Vagina (tissue), 2 donors: ENCODE measurements at regions of chr9 and their contacts with region 1.

Region 1: DNA sequence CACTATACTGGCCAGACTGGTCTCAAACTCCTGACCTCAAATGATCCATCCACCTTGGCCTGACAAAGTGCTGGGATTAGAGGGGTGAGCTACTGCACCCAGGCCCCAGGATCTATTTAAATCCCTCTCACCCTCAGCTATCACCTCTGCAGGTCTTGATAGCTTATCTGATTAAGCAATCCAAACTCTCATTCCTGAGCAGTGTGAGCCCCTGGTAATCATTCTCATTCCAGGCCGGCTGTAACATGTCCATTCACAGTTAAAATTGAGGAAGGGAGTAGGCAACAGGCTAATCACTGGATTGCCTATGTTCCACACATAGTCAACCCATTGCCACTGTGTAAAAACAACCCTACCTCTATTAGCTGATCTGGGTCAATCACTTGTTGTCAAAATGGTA is 111.1 kb downstream of the AGTPBP1 start:
- DNase-seq: no peak
- H3K4me3 ChIP-seq: no peak overlapping the region
- H3K27ac ChIP-seq: no peak overlapping the region
- H3K4me1 ChIP-seq: no peaks in the 10 kb centered on the region
- H3K27me3 ChIP-seq: no peaks in the 10 kb centered on the region
- CTCF ChIP-seq: no peak
- POLR2A ChIP-seq: no peak

Region 2: DNA sequence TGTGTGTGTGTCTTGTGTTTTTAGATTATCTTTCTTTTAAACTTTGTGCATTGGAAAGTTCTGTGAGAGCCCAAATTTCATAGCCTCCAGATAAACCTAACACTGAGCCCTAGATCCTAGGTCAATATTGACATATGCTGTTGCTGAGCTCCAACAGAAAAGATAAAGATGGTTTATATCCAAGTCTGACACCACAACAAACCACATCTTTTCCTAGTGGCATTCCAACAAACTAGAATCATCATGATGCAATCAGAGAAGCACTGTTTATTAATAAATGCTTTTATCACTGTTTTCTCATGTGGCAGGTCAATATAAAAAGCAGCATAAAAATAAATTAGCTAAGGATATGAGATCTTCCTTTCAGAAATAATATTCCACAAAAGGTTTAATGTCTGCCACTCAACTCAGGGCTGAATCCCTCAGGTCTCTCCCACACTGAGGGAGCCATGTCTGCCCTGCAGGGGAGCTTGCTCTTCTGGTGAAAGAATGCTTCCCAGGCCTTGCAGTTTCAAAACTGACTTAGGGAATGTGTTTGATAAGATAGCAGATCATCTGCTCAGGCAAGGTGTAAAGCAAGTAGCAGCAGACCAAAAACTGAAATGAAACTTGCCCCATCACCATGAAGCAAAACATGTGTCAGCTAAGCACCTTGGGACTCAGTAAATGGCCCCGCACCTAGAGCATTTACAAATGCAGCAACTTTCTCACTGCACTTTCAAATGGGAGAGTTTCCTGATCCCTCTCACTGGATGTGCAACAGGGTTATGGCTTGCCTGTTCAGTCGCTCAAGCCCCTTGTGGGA is 382.0 kb before region 1 on chr9:
- intact Hi-C with region 1: no loop called
- DNase-seq: no peak
- H3K4me3 ChIP-seq: no peak overlapping the region
- H3K27ac ChIP-seq: no peak overlapping the region
- H3K4me1 ChIP-seq: peaks cover 10% of the 10 kb centered on the region
- H3K27me3 ChIP-seq: no peaks in the 10 kb centered on the region
- CTCF ChIP-seq: no peak
- POLR2A ChIP-seq: no peak

Region 3: DNA sequence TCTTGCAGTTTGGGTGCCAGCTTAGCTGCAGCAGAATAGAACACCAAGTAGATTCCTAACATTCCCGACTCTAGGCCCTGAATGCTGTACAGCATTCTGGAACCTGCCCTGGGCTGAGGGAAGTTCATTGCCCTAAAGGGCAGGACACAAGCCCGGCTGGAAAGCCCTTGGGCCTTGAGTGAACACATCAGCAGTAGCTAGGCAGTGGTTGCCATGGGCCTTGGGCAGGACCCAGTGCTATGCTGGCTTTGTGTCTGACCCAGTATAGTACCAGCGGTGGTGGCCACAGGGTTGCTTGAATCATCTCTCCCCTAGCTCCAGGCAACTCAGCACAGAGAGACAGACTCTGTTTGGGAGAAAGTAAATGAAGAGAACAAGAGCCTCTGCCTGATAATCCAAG is 26.7 kb before region 1 on chr9:
- intact Hi-C with region 1: loop called (anchors 1 kb)
- DNase-seq: no peak
- H3K4me3 ChIP-seq: no peak overlapping the region
- H3K27ac ChIP-seq: no peak overlapping the region
- H3K4me1 ChIP-seq: no peaks in the 10 kb centered on the region
- H3K27me3 ChIP-seq: no peaks in the 10 kb centered on the region
- CTCF ChIP-seq: no peak
- POLR2A ChIP-seq: no peak

Region 4: GRCh38 chr9:85647571-85647970 is 16.9 kb after region 1 on chr9:
- intact Hi-C with region 1: no loop called
- DNase-seq: no peak
- H3K4me3 ChIP-seq: no peak overlapping the region
- H3K27ac ChIP-seq: no peak overlapping the region
- H3K4me1 ChIP-seq: no peaks in the 10 kb centered on the region
- H3K27me3 ChIP-seq: no peaks in the 10 kb centered on the region
- CTCF ChIP-seq: no peak
- POLR2A ChIP-seq: no peak